ENCODE measurements at regions of chr2 and their contacts with region 1.

Region 1: DNA sequence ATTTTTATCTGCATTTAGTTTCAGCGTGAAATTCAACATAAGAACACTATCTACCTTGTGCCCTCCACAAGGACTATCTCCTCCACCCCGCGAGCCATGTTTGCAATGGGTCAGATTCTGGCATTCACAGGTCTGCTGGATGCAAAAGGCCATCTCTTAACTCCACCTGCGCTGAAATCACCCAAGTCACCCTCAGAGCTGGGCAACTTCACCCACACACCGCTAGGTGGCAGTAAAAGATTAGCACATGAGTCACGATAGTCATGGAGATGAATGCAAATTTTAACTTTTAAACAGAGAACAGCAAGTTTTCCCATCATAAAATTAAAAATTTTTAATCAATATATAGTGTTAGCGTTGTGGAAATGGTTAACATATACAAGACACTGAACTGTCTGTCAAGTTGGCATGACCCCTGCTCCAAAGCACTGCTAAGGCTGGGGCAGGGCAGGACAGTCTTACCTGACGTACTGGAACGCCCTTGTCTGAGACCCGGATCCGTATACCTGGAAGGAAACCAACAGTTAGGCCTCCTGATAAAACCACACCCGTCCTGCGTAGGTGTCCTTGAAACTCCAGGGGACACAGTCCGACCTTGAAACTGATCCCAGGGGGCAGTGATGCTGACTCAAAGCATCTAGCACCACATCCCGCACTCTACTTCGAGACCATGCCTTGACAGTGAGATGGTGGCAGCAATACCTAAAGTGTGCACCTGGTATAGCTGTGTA is 89.6 kb downstream of the UXS1 start:
- DNase-seq: peak; percentile 75
- H3K4me3 Mint-ChIP-seq: no peak overlapping the region
- H3K27ac Mint-ChIP-seq: no peak overlapping the region
- H3K4me1 Mint-ChIP-seq: peaks cover 15% of the 10 kb centered on the region
- H3K27me3 Mint-ChIP-seq: no peaks in the 10 kb centered on the region

Region 2: GRCh38 chr2:106011380-106011779 is 93.1 kb before region 1 on chr2:
- CTCF ChIA-PET with region 1: no interaction called
- POLR2A ChIA-PET with region 1: no interaction called
- intact Hi-C with region 1: no loop called
- DNase-seq: no peak
- H3K4me3 Mint-ChIP-seq: no peak overlapping the region
- H3K27ac Mint-ChIP-seq: no peak overlapping the region
- H3K4me1 Mint-ChIP-seq: no peaks in the 10 kb centered on the region
- H3K27me3 Mint-ChIP-seq: no peaks in the 10 kb centered on the region

Region 3: DNA sequence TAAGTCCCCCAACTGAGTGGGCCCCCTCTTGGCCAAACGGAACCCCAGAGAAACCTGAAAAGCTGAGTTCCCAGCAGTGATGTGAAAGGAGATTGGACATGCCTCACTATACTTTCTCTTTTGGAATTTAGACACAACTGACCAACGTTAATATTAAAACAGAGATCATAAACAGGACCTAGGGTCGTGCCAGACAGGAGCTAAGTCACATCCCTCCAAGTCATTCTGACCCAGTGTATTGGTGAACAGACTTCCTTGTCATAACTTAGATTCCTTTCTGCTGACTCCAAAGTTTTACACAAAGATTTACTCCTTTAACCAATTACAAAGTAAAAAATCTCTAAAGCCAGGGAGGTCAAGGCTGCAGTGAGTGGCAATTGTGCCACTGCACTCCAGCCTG is 42.7 kb after region 1 on chr2:
- CTCF ChIA-PET with region 1: interaction called, 9 read pairs
- POLR2A ChIA-PET with region 1: no interaction called
- intact Hi-C with region 1: loop called (anchors 5 kb)
- DNase-seq: no peak
- H3K4me3 Mint-ChIP-seq: no peak overlapping the region
- H3K27ac Mint-ChIP-seq: peak overlapping the region; percentile 85
- H3K4me1 Mint-ChIP-seq: peaks cover 51% of the 10 kb centered on the region
- H3K27me3 Mint-ChIP-seq: no peaks in the 10 kb centered on the region

Region 4: GRCh38 chr2:106193977-106194778 is 89.7 kb after region 1 on chr2 and contains the start of gene UXS1:
- CTCF ChIA-PET with region 1: interaction called, 11 read pairs
- POLR2A ChIA-PET with region 1: no interaction called
- intact Hi-C with region 1: loop called (anchors 2 kb)
- DNase-seq: peak; percentile 99
- H3K4me3 Mint-ChIP-seq: peak within 1 kb of the TSS; percentile 84
- H3K27ac Mint-ChIP-seq: peak within 1 kb of the TSS; percentile 87
- H3K4me1 Mint-ChIP-seq: peaks cover 40% of the 10 kb centered on the region
- H3K27me3 Mint-ChIP-seq: peaks cover 2% of the 10 kb centered on the region
- total RNA-seq, gene UXS1: 39.2 to 41.5 TPM

Region 5: GRCh38 chr2:106542811-106543259 is 438.3 kb after region 1 on chr2:
- CTCF ChIA-PET with region 1: interaction called, 20 read pairs
- POLR2A ChIA-PET with region 1: no interaction called
- intact Hi-C with region 1: loop called (anchors 1 kb)
- DNase-seq: peak; percentile 84
- H3K4me3 Mint-ChIP-seq: peak overlapping the region; percentile 57
- H3K27ac Mint-ChIP-seq: no peak overlapping the region
- H3K4me1 Mint-ChIP-seq: no peaks in the 10 kb centered on the region
- H3K27me3 Mint-ChIP-seq: peaks cover 22% of the 10 kb centered on the region

Measured in activated CD4-positive, alpha-beta memory T cell treated with anti-CD3 and anti-CD28 coated beads for 36 hours (primary cell).